ENCODE measurements at regions of chr19 and their contacts with region 1.

Region 1: DNA sequence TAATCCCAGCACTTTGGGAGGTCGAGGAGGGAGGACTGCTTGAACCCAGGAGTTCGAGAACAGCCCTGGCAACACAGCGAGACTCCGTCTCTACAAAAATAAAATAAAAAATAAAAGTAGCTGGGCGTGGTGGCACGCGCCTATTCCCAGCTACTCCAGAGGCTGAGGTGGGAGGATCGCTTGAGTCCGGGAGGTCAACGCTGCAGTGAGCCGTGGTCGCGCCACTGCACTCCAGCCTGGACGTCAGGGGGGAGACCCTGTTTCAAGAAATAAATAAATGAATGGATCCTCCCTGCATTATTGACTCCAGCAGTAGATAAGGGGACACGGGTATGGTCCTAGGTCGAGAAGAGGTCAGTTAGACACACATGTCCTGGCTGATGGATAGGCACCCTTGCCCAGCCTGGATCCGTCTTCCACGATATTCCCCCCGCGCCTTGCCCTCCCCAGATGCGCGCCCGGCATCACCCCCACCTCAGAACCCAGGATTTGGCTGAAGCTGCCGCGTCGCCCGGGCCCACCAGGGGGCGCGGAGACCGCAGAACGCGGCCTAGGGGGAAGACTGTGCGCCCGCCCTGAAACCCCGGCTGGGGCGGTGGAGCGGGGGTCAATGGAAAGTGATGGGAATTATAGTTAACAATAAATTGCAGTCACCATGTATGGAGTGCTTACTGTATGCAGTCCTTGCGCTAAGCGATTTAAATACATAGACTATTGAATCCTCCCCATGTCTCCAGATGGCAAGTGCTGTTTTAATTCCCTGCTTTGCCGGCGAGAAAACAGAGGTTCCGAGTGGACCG is 2.1 kb upstream of the HOOK2 start:
- DNase-seq: peak; percentile 89
- ATAC-seq: peak; percentile 55
- H3K4me3 ChIP-seq: peak overlapping the region; percentile 68
- H3K27ac ChIP-seq: peak overlapping the region; percentile 33; the same call in 1 of the 2 replicates
- H3K4me1 ChIP-seq: peaks cover 36% of the 10 kb centered on the region
- H3K27me3 ChIP-seq: no peaks in the 10 kb centered on the region
- CTCF ChIP-seq: peak; percentile 99

Region 2: GRCh38 chr19:12766051-12766521 is 11.3 kb before region 1 on chr19:
- CTCF ChIA-PET with region 1: interaction called, 12 read pairs
- POLR2A ChIA-PET with region 1: no interaction called
- intact Hi-C with region 1: no loop called
- DNase-seq: peak; percentile 79
- ATAC-seq: peak; percentile 92
- H3K4me3 ChIP-seq: peak overlapping the region; percentile 67
- H3K27ac ChIP-seq: no peak overlapping the region
- H3K4me1 ChIP-seq: no peaks in the 10 kb centered on the region
- H3K27me3 ChIP-seq: no peaks in the 10 kb centered on the region
- CTCF ChIP-seq: peak; percentile 81

Region 3: GRCh38 chr19:12791238-12792021 is 14.0 kb after region 1 on chr19 and contains the start of gene JUNB:
- CTCF ChIA-PET with region 1: interaction called, 5 read pairs
- POLR2A ChIA-PET with region 1: interaction called, 11 read pairs
- intact Hi-C with region 1: loop called (anchors 1 kb)
- DNase-seq: peak; percentile 99
- ATAC-seq: peak; percentile 43
- H3K4me3 ChIP-seq: peak within 1 kb of the TSS; percentile 90
- H3K27ac ChIP-seq: peak within 1 kb of the TSS; percentile 95
- H3K4me1 ChIP-seq: peaks cover 51% of the 10 kb centered on the region
- H3K27me3 ChIP-seq: no peaks in the 10 kb centered on the region
- CTCF ChIP-seq: no peak
- total RNA-seq, gene JUNB: 343 and 391 TPM in 2 replicates

Region 4: DNA sequence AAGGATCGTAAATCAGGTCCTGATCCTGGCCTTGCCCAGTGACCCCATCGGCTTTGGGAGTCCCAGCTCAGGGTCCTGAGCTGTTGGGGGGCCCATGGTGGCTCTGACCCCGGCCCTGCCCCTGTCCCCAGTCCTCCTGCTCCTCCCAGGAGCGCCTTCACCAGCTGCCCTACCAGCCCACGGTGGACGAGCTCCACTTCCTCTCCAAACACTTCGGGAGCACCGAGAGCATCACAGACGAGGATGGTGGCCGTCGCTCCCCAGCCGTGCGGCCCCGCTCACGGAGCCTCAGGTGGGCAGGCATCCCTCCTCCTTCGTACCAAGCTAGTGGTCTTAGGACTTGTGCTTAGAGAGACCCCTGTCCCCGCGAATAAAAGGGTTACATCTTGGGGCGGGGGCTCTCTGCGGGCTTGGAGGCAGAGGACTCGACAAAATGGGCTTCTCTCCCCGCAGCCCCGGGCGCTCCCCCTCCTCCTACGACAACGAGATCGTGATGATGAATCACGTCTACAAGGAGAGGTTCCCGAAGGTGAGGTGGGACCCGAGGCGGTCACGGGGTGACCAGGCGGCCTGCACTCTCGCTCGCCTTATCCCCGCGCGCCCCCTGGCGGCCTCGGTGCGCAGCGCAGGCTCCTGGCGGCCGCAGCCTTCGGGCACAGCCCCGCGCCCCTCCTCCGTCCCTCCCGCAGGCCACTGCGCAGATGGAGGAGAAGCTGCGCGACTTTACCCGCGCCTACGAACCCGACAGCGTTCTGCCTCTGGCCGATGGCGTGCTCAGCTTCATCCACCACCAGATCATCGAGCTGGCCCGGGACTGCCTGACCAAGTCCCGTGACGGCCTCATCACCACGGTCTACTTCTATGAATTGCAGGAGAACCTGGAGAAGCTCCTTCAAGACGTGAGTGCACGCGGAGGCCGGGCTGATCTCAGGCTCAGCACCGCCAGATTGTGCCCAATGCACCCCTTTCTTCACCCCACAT is 70.0 kb after region 1 on chr19:
- CTCF ChIA-PET with region 1: interaction called, 6 read pairs
- POLR2A ChIA-PET with region 1: no interaction called
- intact Hi-C with region 1: loop called (anchors 5 kb)
- DNase-seq: peak; percentile 94
- ATAC-seq: peak; percentile 97
- H3K4me3 ChIP-seq: peak overlapping the region; percentile 42; the same call in 1 of the 2 replicates
- H3K27ac ChIP-seq: no peak overlapping the region
- H3K4me1 ChIP-seq: peaks cover 14% of the 10 kb centered on the region
- H3K27me3 ChIP-seq: no peaks in the 10 kb centered on the region
- CTCF ChIP-seq: peak; percentile 99

Region 5: DNA sequence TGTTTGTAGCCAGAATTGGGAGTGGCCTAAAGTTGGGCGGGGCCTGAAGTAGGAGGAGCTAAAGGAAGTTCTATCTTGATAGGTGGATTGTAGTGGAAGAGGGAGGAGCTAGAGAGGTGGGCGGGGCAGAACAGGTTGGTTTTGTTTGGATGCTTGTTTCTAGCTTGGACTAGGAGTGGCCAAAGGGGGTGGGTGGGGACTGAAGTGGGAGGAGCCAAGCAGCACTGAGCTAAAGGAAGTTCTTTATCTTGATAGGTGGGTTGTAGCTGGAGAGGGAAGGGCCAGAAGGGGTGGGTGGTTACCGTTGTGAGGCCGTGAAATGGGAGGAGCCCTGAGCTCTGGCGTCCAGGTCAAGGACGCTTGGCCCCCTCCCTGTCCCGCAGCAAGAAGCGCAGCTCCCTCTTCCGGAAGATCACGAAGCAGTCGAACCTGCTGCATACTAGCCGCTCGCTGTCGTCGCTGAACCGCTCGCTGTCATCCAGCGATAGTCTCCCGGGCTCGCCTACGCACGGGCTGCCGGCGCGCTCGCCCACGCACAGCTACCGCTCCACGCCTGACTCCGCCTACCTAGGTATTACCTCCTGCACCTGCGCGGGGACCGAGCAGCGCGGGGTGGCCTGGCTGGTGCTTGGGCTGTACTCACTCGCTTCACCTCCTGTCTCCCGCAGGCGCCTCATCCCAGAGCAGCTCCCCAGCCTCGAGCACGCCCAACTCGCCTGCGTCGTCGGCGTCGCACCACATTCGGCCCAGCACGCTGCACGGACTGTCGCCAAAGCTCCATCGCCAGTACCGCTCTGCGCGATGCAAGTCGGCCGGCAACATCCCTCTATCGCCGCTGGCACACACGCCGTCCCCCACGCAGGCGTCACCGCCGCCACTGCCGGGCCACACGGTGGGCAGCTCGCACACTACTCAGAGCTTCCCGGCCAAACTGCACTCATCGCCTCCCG is 95.8 kb after region 1 on chr19:
- CTCF ChIA-PET with region 1: no interaction called
- POLR2A ChIA-PET with region 1: interaction called, 17 read pairs
- intact Hi-C with region 1: no loop called
- DNase-seq: peak; percentile 91
- ATAC-seq: peak; percentile 78
- H3K4me3 ChIP-seq: peak overlapping the region; percentile 52
- H3K27ac ChIP-seq: no peak overlapping the region
- H3K4me1 ChIP-seq: peaks cover 6% of the 10 kb centered on the region; the same call in 1 of the 2 replicates
- H3K27me3 ChIP-seq: no peaks in the 10 kb centered on the region
- CTCF ChIP-seq: no peak

Region 6: GRCh38 chr19:12890787-12891552 is 113.6 kb after region 1 on chr19 and contains the start of gene GCDH:
- CTCF ChIA-PET with region 1: no interaction called
- POLR2A ChIA-PET with region 1: no interaction called
- intact Hi-C with region 1: no loop called
- DNase-seq: peak; percentile 100
- ATAC-seq: peak; percentile 98
- H3K4me3 ChIP-seq: peak within 1 kb of the TSS; percentile 80
- H3K27ac ChIP-seq: no peak within 1 kb of the TSS
- H3K4me1 ChIP-seq: peaks cover 7% of the 10 kb centered on the region
- H3K27me3 ChIP-seq: no peaks in the 10 kb centered on the region
- CTCF ChIP-seq: no peak
- total RNA-seq, gene GCDH: 37.4 and 38.6 TPM in 2 replicates

Measured in PC-3 (cell line).